ENCODE measurements at regions of chr17 and their contacts with region 1.

Region 1: DNA sequence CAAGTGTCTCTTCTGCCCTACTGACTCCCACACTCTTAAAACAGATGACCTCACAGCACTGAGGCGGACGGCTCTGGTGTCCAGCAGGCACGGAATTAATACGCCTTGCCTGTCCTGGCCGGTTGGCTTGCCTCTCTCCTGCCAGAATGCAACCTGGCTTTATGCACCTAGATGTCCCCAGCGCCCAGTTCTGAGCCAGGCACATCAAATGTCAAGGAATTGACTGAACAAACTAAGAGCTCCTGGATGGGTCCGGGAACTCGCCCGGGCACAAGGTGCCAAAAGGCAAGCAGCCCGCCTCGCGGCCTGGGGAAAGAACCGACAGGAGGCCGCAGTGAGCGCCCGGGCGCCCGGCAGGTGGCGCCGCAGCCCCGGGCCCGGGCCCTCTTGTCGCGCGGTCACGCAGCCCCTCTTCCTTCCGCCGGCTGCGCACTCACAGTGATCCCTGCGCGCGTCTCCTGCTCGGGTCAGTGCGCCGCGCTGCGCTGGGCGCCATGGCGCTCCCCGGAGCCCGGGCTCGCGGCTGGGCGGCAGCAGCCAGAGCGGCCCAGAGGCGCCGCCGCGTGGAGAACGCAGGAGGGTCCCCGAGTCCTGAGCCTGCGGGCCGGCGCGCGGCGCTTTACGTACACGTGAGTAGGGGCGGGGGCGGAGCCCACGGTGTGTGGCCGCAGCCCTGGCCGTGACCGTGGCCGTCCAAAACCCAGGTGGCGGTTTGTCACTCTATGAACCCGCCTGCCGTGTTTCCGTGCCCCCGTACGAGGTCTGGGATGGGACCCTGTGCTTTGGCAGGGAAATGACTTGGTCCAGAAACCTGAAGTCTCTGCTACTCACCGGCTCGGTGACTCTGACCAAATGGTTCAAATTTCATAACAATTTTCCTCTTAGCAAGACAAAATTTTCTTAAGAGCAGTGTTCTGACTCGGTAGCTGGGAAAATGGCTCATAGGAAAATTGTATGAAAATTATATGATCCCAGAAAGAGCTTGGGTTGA is at the start of gene RSAD1:
- DNase-seq: peak; percentile 88 to 95 (median 95)
- ATAC-seq: peak; percentile 91
- H3K4me3 ChIP-seq: peak within 1 kb of the TSS; percentile 60
- H3K27ac ChIP-seq: peak within 1 kb of the TSS; percentile 53
- H3K4me1 ChIP-seq: peaks cover 3% of the 10 kb centered on the region
- H3K27me3 ChIP-seq: no peaks in the 10 kb centered on the region
- total RNA-seq, gene RSAD1: 27.8 to 38.5 (median 32.3) TPM

Region 2: GRCh38 chr17:50361561-50362480 is 116.9 kb before region 1 on chr17:
- intact Hi-C with region 1: loop called in 2 of 4 experiments (anchors 10 kb)
- DNase-seq: peak in 2 of 3 donors; percentile 59 to 77
- ATAC-seq: peak; percentile 42 to 50
- H3K4me3 ChIP-seq: no peak overlapping the region
- H3K27ac ChIP-seq: no peak overlapping the region
- H3K4me1 ChIP-seq: no peaks in the 10 kb centered on the region
- H3K27me3 ChIP-seq: no peaks in the 10 kb centered on the region

Region 3: DNA sequence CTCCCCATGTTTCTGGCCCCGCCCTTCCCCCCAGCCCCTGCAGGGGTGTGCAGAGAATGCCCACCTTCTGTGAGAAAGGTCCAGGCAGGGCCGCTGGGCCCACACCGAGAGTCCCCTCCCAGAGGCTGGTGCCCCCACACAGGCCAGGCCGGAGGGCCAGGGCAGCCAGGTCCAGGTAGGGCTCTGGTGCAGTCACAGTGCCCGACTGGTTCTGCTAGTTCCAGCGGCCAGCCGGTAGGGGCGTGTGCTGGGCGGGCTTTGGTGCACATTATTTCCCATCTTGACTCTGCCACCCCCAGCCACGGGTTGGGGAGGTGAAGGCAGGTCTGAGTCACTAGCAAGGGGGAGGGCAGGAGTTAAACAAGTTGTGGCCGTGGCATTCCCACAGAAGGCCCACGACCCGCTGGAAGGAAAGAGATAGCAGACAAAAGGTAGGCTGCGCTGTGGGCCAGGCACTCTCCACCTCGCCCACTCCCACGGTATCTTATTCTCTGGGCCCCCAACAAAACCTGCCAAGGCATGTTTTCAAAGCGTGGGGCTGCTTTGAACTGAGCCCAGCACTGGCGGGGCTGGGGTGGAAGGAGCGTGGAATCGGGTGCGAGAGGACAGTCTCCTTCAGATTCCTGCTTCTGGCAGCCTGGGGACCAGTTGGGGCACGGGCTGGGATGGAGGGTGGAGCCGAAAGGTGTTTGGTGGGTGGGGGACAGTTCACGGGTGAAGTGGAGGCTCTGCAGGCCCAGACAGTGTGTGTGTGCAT is 55.7 kb after region 1 on chr17:
- intact Hi-C with region 1: loop called in 3 of 4 experiments (anchors 5 to 10 kb)
- DNase-seq: no peak
- ATAC-seq: peak; percentile 32 to 51
- H3K4me3 ChIP-seq: no peak overlapping the region
- H3K27ac ChIP-seq: peak overlapping the region; percentile 10
- H3K4me1 ChIP-seq: peaks cover 3% of the 10 kb centered on the region
- H3K27me3 ChIP-seq: no peaks in the 10 kb centered on the region

Region 4: GRCh38 chr17:50541716-50542688 is 63.3 kb after region 1 on chr17:
- intact Hi-C with region 1: loop called in 3 of 4 experiments (anchors 5 to 10 kb)
- DNase-seq: peak; percentile 88 to 95 (median 95)
- ATAC-seq: peak; percentile 94
- H3K4me3 ChIP-seq: peak overlapping the region; percentile 49
- H3K27ac ChIP-seq: peak overlapping the region; percentile 21
- H3K4me1 ChIP-seq: peaks cover 4% of the 10 kb centered on the region
- H3K27me3 ChIP-seq: no peaks in the 10 kb centered on the region

Region 5: GRCh38 chr17:50613007-50613992 is 134.6 kb after region 1 on chr17:
- intact Hi-C with region 1: no loop called
- DNase-seq: peak in 1 of 3 donors; percentile 76
- ATAC-seq: no peak
- H3K4me3 ChIP-seq: no peak overlapping the region
- H3K27ac ChIP-seq: no peak overlapping the region
- H3K4me1 ChIP-seq: no peaks in the 10 kb centered on the region
- H3K27me3 ChIP-seq: no peaks in the 10 kb centered on the region

Region 6: DNA sequence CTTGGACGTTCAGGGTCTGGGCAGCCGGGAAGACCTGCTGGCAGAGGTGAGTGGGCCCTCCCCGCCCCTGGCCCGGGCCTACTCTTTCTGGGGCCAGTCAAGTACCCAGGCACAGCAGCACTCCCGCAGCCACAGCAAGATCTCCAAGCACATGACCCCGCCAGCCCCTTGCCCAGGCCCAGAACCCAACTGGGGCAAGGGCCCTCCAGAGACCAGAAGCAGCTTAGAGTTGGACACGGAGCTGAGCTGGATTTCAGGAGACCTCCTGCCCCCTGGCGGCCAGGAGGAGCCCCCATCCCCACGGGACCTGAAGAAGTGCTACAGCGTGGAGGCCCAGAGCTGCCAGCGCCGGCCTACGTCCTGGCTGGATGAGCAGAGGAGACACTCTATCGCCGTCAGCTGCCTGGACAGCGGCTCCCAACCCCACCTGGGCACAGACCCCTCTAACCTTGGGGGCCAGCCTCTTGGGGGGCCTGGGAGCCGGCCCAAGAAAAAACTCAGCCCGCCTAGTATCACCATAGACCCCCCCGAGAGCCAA is 147.4 kb after region 1 on chr17:
- intact Hi-C with region 1: loop called in 2 of 4 experiments (anchors 10 kb)
- DNase-seq: peak; percentile 80 to 91 (median 90)
- ATAC-seq: peak; percentile 71 to 81
- H3K4me3 ChIP-seq: no peak overlapping the region
- H3K27ac ChIP-seq: no peak overlapping the region
- H3K4me1 ChIP-seq: no peaks in the 10 kb centered on the region
- H3K27me3 ChIP-seq: no peaks in the 10 kb centered on the region

Region 7: GRCh38 chr17:50681263-50682210 is 202.9 kb after region 1 on chr17:
- intact Hi-C with region 1: loop called in 2 of 4 experiments (anchors 10 kb)
- DNase-seq: peak in 1 of 3 donors; percentile 79
- ATAC-seq: peak; percentile 66 to 67
- H3K4me3 ChIP-seq: no peak overlapping the region
- H3K27ac ChIP-seq: no peak overlapping the region
- H3K4me1 ChIP-seq: peaks cover under 1% of the 10 kb centered on the region
- H3K27me3 ChIP-seq: no peaks in the 10 kb centered on the region

Measured in right cardiac atrium (tissue), 5 donors.